MCF 10A (cell line): ENCODE measurements at regions of chr7 and their contacts with region 1.

Region 1: DNA sequence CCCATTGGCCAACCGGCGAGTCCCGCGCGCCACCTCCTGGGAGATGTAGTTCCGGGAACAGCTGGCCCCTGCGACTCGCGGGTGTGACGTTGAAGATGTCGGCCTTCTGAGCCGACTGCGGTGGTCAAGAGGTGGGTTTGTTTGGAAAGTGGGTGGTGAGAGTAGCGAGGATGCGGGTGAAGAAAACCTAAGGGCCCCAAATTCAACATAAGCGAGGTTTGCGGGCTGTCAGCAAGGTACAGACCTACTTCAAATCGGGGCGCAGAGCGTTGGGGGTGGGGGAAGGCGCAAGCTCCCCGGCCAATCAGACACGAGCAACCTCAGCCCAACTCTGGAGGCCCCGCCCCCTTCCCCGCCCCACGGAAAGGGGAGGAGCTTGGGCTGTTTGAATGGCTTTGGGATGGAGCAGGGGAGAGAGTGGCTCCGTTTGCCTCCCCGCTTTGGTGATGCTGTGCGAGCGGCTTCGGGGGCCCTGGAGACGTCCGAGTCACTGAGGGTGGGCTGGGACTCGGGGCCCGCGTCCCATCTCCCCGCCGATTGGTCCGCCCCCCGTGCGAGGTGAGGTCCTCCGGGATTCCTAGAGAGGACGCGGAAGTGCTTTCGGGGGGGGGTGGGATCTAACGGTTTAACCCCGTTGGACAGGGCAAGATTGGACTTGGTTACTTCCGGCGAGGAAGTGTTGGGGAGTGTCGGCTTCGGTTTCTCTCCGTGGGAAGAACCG is at the start of gene ZKSCAN5:
- DNase-seq: peak; percentile 96
- H3K4me3 Mint-ChIP-seq: peak within 1 kb of the TSS; percentile 87
- H3K27ac Mint-ChIP-seq: peak within 1 kb of the TSS; percentile 83
- H3K4me1 Mint-ChIP-seq: peaks cover 17% of the 10 kb centered on the region
- H3K27me3 Mint-ChIP-seq: no peaks in the 10 kb centered on the region
- CTCF ChIP-seq: no peak
- total RNA-seq, gene ZKSCAN5: 13.6 and 16.2 TPM in 2 replicates

Region 2: DNA sequence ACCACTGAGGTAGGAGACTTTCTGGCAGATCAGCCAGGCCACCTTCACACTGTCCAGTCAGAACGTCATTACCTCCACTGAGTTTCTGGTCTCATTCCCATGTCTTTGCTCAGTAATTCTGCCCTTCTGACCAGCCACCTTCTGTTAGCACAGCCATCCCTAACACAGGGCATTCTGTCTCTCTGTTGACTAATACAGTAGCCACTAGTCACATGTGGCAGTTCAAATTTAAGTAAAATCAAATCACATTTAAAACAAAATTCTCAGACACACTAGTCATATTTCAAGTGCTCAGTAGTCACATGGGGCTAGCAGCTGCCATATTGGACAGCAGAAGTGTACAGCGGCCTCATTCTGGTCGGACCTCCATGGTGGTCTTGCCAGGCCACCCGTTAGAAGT is 58.7 kb before region 1 on chr7:
- CTCF ChIA-PET with region 1: no interaction called
- POLR2A ChIA-PET with region 1: no interaction called
- intact Hi-C with region 1: no loop called
- DNase-seq: no peak
- H3K4me3 Mint-ChIP-seq: no peak overlapping the region
- H3K27ac Mint-ChIP-seq: no peak overlapping the region
- H3K4me1 Mint-ChIP-seq: peaks cover 5% of the 10 kb centered on the region
- H3K27me3 Mint-ChIP-seq: no peaks in the 10 kb centered on the region
- CTCF ChIP-seq: no peak

Region 3: GRCh38 chr7:99465421-99465768 is 39.4 kb before region 1 on chr7:
- CTCF ChIA-PET with region 1: interaction called, 5 read pairs
- POLR2A ChIA-PET with region 1: interaction called, 23 read pairs
- intact Hi-C with region 1: no loop called
- DNase-seq: peak; percentile 14
- H3K4me3 Mint-ChIP-seq: peak overlapping the region; percentile 89
- H3K27ac Mint-ChIP-seq: peak overlapping the region; percentile 98
- H3K4me1 Mint-ChIP-seq: peaks cover 15% of the 10 kb centered on the region
- H3K27me3 Mint-ChIP-seq: no peaks in the 10 kb centered on the region
- CTCF ChIP-seq: no peak

Region 4: DNA sequence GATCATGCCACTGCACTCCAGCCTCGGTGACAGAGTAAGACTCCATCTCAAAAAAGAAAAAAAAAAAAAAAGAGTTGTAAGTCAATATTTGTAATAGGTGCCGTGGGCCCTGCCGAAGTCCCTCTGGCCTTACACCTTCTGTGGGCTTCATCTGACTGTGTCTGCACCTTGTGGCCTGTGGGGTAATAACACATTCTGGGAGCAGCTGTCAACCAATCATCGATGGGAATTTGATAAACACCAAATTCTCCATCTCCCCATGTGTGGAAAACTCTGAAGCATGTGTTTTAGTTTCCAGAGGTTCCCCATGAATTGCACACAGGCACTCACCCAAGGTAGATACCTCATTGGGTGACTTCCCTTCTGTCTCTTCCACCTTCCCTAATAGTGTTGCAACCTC is 15.5 kb before region 1 on chr7:
- CTCF ChIA-PET with region 1: interaction called, 4 read pairs
- POLR2A ChIA-PET with region 1: interaction called, 10 read pairs
- intact Hi-C with region 1: no loop called
- DNase-seq: no peak
- H3K4me3 Mint-ChIP-seq: no peak overlapping the region
- H3K27ac Mint-ChIP-seq: no peak overlapping the region
- H3K4me1 Mint-ChIP-seq: peaks cover 6% of the 10 kb centered on the region
- H3K27me3 Mint-ChIP-seq: no peaks in the 10 kb centered on the region
- CTCF ChIP-seq: no peak

Region 5: GRCh38 chr7:99558306-99559174 is 53.8 kb after region 1 on chr7 and contains the start of gene ZNF655:
- CTCF ChIA-PET with region 1: no interaction called
- POLR2A ChIA-PET with region 1: interaction called, 51 read pairs
- intact Hi-C with region 1: loop called (anchors 2 kb)
- DNase-seq: peak; percentile 85
- H3K4me3 Mint-ChIP-seq: peak within 1 kb of the TSS; percentile 85
- H3K27ac Mint-ChIP-seq: peak within 1 kb of the TSS; percentile 86
- H3K4me1 Mint-ChIP-seq: peaks cover 33% of the 10 kb centered on the region
- H3K27me3 Mint-ChIP-seq: no peaks in the 10 kb centered on the region
- CTCF ChIP-seq: no peak
- total RNA-seq, gene ZNF655: 85.2 and 89.9 TPM in 2 replicates

Region 6: DNA sequence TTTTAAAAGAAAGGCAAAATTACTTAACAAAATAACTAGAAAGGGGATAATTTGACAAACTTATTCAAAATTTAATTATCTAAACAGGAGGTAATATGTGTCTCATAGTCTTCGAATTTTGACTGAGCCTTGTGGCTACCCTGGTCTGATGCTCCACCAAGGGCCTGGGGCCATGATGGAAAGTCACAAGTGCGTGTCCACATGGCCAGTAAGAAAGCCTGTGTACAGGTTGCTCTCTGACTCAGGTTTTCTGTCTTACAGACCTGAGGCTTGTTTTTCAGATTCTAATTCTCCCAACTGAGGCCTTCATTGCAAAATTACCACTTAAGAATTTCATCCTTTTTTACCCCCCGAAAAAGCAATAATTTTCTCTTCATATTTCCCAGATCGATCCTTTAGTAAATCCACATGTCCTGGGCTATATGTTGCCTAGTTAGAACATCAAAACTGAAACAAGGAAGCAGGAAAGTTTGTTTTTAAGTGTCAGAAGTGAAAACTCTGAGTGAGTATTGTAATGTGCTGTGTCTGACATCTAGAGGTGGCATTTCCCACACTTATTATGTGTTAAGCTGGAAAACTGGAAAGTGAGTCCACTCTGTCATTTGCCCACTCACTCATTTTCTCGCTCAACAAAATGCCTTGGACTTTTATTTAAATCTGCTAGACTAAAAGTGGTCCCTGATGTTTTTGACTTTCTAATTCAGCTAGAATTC is 333.0 kb after region 1 on chr7:
- CTCF ChIA-PET with region 1: no interaction called
- POLR2A ChIA-PET with region 1: interaction called, 11 read pairs
- intact Hi-C with region 1: no loop called
- DNase-seq: peak; percentile 30
- H3K4me3 Mint-ChIP-seq: no peak overlapping the region
- H3K27ac Mint-ChIP-seq: peak overlapping the region; percentile 36
- H3K4me1 Mint-ChIP-seq: peaks cover 7% of the 10 kb centered on the region
- H3K27me3 Mint-ChIP-seq: no peaks in the 10 kb centered on the region
- CTCF ChIP-seq: peak; percentile 48